ENCODE measurements at regions of chr15 and their contacts with region 1.

Region 1: DNA sequence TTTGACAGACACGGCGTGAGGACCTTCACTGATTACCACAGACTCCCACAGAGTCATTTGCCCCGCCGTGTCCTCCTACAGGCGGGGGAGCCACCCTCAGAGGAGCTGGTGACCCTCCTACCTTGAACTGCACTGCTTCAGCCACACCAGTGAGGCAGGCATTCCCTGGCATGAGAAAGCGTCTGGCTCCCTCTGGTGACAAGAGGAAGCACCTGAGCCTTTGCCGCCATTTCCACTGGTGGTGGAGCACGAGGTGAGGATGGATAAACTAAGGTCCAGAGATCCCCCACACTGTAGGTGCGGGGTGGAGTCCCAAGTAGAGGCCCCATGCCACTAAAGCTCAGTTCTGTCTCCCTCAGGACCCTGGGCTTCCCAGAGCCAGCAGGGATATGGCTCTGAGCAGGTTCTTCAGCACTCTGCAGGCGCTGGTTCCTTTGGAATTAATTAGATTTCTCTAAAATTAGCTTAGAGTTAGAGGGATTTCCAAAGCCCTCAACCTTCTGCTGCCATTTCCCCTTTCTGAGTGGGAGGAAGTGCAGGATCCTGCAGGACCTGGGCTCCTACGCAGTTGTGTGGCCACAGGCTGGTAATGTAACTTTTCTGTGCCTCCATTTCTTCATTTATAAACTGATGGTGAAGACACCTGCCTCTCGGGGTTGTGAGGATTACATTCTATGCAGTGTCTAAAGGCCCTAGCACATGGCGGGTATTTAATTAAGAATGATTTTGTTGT is 224.0 kb downstream of the SLCO3A1 start:
- DNase-seq: peak; percentile 83
- H3K4me3 ChIP-seq: no peak overlapping the region
- H3K27ac ChIP-seq: no peak overlapping the region
- H3K4me1 ChIP-seq: peaks cover 29% of the 10 kb centered on the region
- CTCF ChIP-seq: peak; percentile 87

Region 2: GRCh38 chr15:91302588-91303439 is 774.7 kb before region 1 on chr15:
- CTCF ChIA-PET with region 1: interaction called, 3 read pairs
- POLR2A ChIA-PET with region 1: no interaction called
- intact Hi-C with region 1: loop called (anchors 2 kb)
- DNase-seq: peak; percentile 66
- H3K4me3 ChIP-seq: no peak overlapping the region
- H3K27ac ChIP-seq: no peak overlapping the region
- H3K4me1 ChIP-seq: no peaks in the 10 kb centered on the region
- CTCF ChIP-seq: peak; percentile 85

Region 3: DNA sequence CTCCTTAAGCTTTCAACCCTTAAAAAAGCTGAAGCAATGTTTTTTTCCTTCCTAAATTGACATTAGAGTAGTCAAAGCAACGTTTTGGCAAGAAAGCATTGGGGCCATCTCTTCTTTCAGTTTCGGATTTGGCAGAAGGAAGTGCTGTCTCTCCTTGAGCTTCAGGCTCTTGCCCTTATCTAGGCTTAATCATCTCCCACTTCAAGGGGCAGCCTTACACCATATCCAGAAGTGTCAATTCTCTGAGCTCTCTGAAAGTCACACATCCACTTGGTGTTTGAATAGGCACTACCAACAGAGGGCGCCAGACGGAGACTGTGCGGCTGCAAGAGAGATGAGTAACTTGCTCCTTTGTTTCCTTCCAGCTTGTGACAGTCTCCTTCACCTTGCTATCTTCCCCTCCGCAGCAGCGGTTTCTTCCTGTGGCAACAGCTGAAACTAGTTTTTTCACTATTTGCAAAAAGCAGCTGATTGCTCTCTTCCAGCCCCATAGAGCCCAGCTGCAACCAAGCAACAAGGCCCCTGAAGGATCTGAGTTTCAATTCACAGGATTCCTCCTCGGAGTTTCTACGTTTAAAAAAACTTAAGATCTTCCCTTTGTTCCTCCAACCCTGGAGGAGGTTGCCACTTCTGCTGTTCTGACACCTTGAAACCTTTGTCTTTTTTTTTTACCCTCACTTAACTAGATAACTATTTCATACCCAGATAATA is 371.0 kb before region 1 on chr15:
- CTCF ChIA-PET with region 1: no interaction called
- POLR2A ChIA-PET with region 1: no interaction called
- intact Hi-C with region 1: loop called (anchors 2 kb)
- DNase-seq: peak; percentile 68
- H3K4me3 ChIP-seq: no peak overlapping the region
- H3K27ac ChIP-seq: no peak overlapping the region
- H3K4me1 ChIP-seq: no peaks in the 10 kb centered on the region
- CTCF ChIP-seq: peak; percentile 95